ENCODE measurements at regions of chr15 and their contacts with region 1.

Region 1: GRCh38 chr15:74615508-74616365 is at the start of gene CLK3:
- DNase-seq: peak; percentile 97
- H3K4me3 Mint-ChIP-seq: peak within 1 kb of the TSS; percentile 90
- H3K27ac Mint-ChIP-seq: peak within 1 kb of the TSS; percentile 95
- H3K4me1 Mint-ChIP-seq: peaks cover 39% of the 10 kb centered on the region
- H3K27me3 Mint-ChIP-seq: no peaks in the 10 kb centered on the region
- total RNA-seq, gene CLK3: 124 TPM

Region 2: DNA sequence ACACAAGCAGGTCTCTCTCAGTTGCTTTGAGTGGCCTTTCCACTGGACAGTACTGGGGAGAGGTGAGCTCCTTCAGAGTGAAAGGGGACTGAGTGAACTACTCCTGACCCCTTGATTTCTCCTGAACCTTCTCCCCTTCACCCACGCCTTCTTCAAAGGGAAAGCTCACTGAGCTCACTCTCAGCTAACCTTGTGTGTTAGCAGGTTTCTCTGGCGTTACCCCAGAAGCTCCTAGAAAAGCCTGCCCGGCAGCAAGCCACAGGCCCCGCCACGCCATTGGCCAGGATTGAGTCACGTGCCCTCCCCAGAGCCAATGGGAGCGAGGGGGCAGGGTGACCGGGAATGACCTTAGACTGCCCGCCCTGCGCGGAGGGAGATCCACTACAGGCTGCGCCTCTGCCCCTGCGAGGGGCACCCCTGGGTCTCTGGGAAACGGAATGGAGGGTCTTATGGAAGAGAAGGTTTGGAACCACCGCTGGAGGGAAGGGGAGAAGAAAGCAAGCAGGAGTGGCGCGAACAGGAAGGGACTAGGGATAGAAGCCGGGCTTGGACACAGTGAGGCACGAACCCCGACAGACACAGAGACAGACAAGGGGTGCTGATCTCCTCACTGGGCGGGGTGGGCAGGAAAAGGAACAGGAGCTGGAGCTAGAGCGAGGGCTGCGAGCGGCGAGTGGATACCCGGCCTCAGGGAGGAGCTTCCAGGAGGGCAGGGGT is 17.5 kb before region 1 on chr15:
- CTCF ChIA-PET with region 1: no interaction called
- intact Hi-C with region 1: loop called (anchors 1 kb)
- DNase-seq: peak; percentile 95
- H3K4me3 Mint-ChIP-seq: peak overlapping the region; percentile 100
- H3K27ac Mint-ChIP-seq: peak overlapping the region; percentile 99
- H3K4me1 Mint-ChIP-seq: peaks cover 20% of the 10 kb centered on the region
- H3K27me3 Mint-ChIP-seq: no peaks in the 10 kb centered on the region